Endothelial cell of umbilical vein (primary cell): ENCODE measurements at regions of chr1 and their contacts with region 1.

Region 1: GRCh38 chr1:197915862-197916499 is 1.2 kb upstream of the LHX9 start:
- DNase-seq: peak; percentile 55
- H3K4me3 ChIP-seq: peak overlapping the region in 2 of 3 experiments; percentile 13 to 15
- H3K27ac ChIP-seq: no peak overlapping the region
- H3K4me1 ChIP-seq: peaks cover 44% of the 10 kb centered on the region
- H3K27me3 ChIP-seq: peaks cover 95 to 99% of the 10 kb centered on the region in 2 experiments
- CTCF ChIP-seq: peak; percentile 54 to 78
- POLR2A ChIP-seq: no peak

Region 2: DNA sequence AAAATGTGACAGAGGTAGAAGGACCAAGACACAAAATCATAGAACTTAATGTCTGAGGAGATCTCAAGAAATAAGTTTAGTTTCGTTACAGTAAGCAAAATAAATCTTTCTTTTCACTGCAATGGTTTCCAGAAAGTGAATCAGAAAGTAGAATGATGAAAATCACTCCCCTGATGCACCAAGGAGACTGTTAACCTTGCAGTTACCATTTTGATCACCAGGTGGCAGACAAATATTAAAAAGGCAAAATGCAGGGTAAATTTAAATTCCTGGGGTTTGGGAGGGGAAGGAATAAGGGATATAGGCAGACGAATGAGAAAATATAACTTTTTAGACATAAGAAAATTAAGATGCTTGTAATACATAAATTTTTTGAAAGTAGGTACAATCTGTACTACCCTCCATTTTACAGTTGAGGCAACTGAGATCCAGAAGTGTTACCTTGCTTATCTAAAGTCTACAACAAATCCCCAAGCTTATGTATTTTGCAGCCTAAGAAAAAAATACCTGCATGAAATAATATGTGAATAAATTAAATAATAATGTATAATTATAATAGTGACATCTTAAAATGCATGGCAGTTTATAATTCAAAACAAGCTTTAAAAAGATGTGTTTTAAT is 394.8 kb before region 1 on chr1:
- CTCF ChIA-PET with region 1: interaction called, 13 read pairs
- POLR2A ChIA-PET with region 1: no interaction called
- dilution Hi-C with region 1: no loop called
- intact Hi-C with region 1: no loop called
- DNase-seq: peak; percentile 46
- H3K4me3 ChIP-seq: no peak overlapping the region
- H3K27ac ChIP-seq: no peak overlapping the region
- H3K4me1 ChIP-seq: no peaks in the 10 kb centered on the region
- H3K27me3 ChIP-seq: no peaks in the 10 kb centered on the region
- CTCF ChIP-seq: peak; percentile 39 to 51
- POLR2A ChIP-seq: no peak

Region 3: DNA sequence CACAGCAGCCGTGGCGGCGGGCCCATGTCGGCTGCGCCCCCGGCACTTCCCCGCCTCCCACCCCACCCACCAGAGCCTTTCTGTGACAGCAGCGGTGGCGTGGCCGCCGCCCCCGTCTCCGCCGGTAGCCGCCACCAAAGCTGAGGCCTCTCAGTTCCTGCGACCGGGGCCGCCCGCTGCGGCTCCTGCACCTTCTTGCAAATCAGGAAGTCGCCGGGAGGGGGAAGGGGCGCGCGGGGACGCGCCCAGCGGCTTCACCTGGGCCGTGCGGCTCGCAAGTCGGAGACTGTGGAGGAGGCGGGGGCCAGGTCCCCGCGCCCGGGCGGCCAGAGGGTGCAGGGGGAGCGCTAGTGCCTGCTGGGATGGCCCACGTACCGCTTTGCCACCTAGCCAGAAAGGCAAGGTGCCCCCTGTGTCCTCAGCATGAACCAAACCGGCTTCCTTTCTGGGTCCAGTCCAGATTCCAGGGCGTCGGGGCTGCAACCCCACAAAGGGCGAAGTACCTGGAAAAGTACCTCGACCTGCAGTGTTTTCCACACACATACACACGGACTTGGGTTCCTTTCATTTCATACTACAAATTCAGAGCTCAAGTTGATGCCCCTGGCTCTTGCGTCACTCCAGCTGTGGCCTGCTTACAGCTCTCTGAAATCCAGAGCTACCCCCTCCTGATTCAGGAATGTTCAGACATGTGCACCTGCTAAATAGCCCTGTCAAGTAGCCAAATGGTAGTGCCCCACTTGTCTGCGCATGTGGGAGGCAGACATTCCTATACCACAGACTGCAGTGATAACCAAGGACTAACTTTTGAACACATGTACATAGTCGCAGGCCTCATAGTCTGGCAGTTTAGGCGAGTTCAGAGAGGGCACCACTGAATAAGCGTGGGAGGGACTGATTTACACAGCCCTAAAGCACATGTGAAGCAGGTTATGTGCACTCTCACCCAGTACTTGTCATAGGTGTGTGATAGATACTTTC is 140.4 kb before region 1 on chr1 and contains the start of gene DENND1B:
- CTCF ChIA-PET with region 1: no interaction called
- POLR2A ChIA-PET with region 1: no interaction called
- dilution Hi-C with region 1: no loop called
- intact Hi-C with region 1: loop called (anchors 5 kb)
- DNase-seq: peak; percentile 52
- H3K4me3 ChIP-seq: peak within 1 kb of the TSS; percentile 53 to 65 (median 63)
- H3K27ac ChIP-seq: peak within 1 kb of the TSS; percentile 30
- H3K4me1 ChIP-seq: peaks cover 21% of the 10 kb centered on the region
- H3K27me3 ChIP-seq: no peaks in the 10 kb centered on the region
- CTCF ChIP-seq: no peak
- POLR2A ChIP-seq: no peak
- total RNA-seq, gene DENND1B: 3.3 and 5.4 TPM in 2 replicates

Region 4: GRCh38 chr1:197902454-197903195 is 13.4 kb before region 1 on chr1 and contains the start of gene C1orf53:
- CTCF ChIA-PET with region 1: interaction called, 10 read pairs
- POLR2A ChIA-PET with region 1: no interaction called
- dilution Hi-C with region 1: no loop called
- intact Hi-C with region 1: no loop called
- DNase-seq: peak; percentile 91
- H3K4me3 ChIP-seq: peak within 1 kb of the TSS; percentile 29 to 76 (median 65)
- H3K27ac ChIP-seq: peak within 1 kb of the TSS; percentile 52
- H3K4me1 ChIP-seq: peaks cover 14% of the 10 kb centered on the region
- H3K27me3 ChIP-seq: peaks cover 2 to 22% of the 10 kb centered on the region in 2 experiments
- CTCF ChIP-seq: no peak
- POLR2A ChIP-seq: peak; percentile 74
- total RNA-seq, gene C1orf53: 2.1 and 3.5 TPM in 2 replicates